Mammary epithelial cell (primary cell): ENCODE measurements at regions of chr15 and their contacts with region 1.

Region 1: DNA sequence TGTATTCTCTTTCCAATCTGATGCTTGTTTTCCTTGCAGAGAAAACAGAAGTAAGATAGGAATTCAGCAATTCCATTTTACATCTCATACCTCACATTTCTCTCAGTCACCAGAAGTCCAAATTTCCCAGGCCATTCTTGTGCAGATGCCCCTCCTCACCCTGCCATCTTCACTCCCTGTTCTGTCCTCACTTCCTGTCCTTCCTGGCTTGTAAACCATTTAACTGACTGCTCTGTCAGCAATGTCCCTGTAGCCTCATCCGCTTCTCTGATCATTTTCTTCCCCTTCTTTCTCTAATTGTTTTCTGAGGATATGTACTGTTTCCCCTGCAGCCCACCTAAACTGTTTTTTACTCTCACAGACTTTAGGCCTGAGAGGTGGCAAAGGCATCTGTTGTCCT is 40.3 kb downstream of the BLM start:
- DNase-seq: no peak
- H3K4me3 ChIP-seq: no peak overlapping the region
- H3K27ac ChIP-seq: no peak overlapping the region
- H3K4me1 ChIP-seq: no peaks in the 10 kb centered on the region
- H3K27me3 ChIP-seq: no peaks in the 10 kb centered on the region
- CTCF ChIP-seq: no peak

Region 2: DNA sequence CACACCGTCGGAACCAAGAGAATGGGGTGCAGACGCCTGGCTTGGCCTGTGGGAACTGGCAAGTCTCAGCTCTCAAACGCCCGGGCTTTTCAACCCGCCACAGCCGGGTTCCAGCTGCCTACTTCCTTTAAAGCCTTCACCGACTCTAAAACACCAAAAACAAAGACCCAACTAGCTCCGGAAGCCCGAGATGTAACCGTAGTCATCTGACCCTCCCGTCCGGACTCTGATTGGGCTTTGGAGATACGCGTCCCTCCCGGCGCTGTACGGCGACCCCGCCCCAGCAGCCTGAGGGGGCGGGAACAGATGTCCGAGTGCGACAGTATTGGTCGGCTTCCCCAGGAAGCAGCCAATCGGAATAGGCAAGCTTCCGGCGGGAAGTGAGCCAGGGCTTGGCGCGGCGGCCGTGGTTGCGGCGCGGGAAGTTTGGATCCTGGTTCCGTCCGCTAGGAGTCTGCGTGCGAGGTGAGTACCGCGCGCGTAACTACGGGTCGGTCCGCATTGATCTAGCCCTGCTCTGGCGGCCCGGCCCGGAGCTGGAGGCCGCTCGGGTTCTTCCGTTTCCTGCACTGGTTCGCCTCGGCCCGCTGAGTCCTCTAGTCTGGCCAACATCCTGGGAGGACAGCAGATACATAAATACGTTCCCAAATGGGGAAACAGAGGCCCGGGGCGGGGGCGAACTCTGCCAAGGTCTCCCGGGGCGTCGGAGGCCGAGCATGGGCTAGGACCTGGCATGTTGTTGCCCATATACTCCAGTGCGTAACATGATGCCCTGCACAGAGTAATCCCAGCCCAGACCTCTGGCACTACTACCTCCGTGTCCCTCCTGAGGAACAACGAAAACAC is 40.3 kb before region 1 on chr15 and contains the start of gene BLM:
- CTCF ChIA-PET with region 1: no interaction called
- dilution Hi-C with region 1: loop called (anchors 5 kb)
- in situ Hi-C with region 1: no loop called
- intact Hi-C with region 1: no loop called
- DNase-seq: peak; percentile 96
- H3K4me3 ChIP-seq: peak within 1 kb of the TSS; percentile 78 to 86 (median 83)
- H3K27ac ChIP-seq: peak within 1 kb of the TSS; percentile 56
- H3K4me1 ChIP-seq: peaks cover 17% of the 10 kb centered on the region
- H3K27me3 ChIP-seq: no peaks in the 10 kb centered on the region
- CTCF ChIP-seq: peak in 1 of 2 donors; percentile 36
- total RNA-seq, gene BLM: 0.83 to 9.2 TPM

Region 3: DNA sequence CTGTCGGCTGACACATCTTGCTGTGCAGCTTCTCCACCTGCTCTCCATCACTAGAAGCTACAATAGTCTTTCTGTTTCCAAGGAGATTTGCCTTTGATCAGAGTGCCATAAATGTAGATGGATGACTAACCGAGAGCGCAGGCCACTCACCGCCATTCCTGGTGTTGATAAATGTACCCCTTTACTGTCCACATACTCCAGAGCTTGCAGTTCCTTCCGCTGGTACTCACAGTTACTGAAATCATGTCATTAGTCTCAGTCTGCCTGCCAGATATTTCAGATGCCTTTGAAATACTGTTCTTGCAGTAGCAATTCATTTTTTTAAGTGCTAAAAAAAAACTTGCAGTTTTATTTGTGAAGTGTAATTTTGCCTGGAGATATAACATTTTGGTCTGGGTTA is 32.0 kb after region 1 on chr15:
- CTCF ChIA-PET with region 1: no interaction called
- dilution Hi-C with region 1: no loop called
- in situ Hi-C with region 1: no loop called
- intact Hi-C with region 1: no loop called
- DNase-seq: no peak
- H3K4me3 ChIP-seq: no peak overlapping the region
- H3K27ac ChIP-seq: no peak overlapping the region
- H3K4me1 ChIP-seq: no peaks in the 10 kb centered on the region
- H3K27me3 ChIP-seq: no peaks in the 10 kb centered on the region
- CTCF ChIP-seq: no peak